Gastrocnemius medialis (tissue), 4 donors: ENCODE measurements at regions of chr20 and their contacts with region 1.

Region 1: GRCh38 chr20:16573001-16573965 is at the start of gene KIF16B:
- DNase-seq: peak; percentile 86 to 89
- ATAC-seq: peak; percentile 87 to 88
- H3K4me3 ChIP-seq: peak within 1 kb of the TSS; percentile 79 to 94 (median 90)
- H3K27ac ChIP-seq: peak within 1 kb of the TSS; percentile 86 to 93 (median 90)
- H3K4me1 ChIP-seq: peaks cover 21 to 22% of the 10 kb centered on the region in 2 donors
- H3K27me3 ChIP-seq: no peaks in the 10 kb centered on the region
- CTCF ChIP-seq: no peak
- POLR2A ChIP-seq: peak; percentile 61 to 69
- total RNA-seq, gene KIF16B: 13.4 to 23.9 (median 20.0) TPM

Region 2: GRCh38 chr20:16528078-16528477 is 45.2 kb before region 1 on chr20:
- in situ Hi-C with region 1: loop called in 1 of 4 experiments (anchors 10 kb)
- intact Hi-C with region 1: loop called (anchors 2 kb)
- DNase-seq: peak; percentile 81 to 86
- ATAC-seq: peak; percentile 98 to 99
- H3K4me3 ChIP-seq: no peak overlapping the region
- H3K27ac ChIP-seq: peak overlapping the region; percentile 73 to 88 (median 87)
- H3K4me1 ChIP-seq: peaks cover 14 to 37% of the 10 kb centered on the region in 2 donors
- H3K27me3 ChIP-seq: no peaks in the 10 kb centered on the region
- CTCF ChIP-seq: no peak
- POLR2A ChIP-seq: peak; percentile 50 to 58

Region 3: GRCh38 chr20:16541226-16541625 is 32.1 kb before region 1 on chr20:
- in situ Hi-C with region 1: no loop called
- intact Hi-C with region 1: no loop called
- DNase-seq: peak; percentile 64 to 83
- ATAC-seq: peak; percentile 95 to 99
- H3K4me3 ChIP-seq: no peak overlapping the region
- H3K27ac ChIP-seq: peak overlapping the region; percentile 62 to 81 (median 74)
- H3K4me1 ChIP-seq: peaks cover 14 to 22% of the 10 kb centered on the region in 2 donors
- H3K27me3 ChIP-seq: no peaks in the 10 kb centered on the region
- CTCF ChIP-seq: no peak
- POLR2A ChIP-seq: no peak

Region 4: DNA sequence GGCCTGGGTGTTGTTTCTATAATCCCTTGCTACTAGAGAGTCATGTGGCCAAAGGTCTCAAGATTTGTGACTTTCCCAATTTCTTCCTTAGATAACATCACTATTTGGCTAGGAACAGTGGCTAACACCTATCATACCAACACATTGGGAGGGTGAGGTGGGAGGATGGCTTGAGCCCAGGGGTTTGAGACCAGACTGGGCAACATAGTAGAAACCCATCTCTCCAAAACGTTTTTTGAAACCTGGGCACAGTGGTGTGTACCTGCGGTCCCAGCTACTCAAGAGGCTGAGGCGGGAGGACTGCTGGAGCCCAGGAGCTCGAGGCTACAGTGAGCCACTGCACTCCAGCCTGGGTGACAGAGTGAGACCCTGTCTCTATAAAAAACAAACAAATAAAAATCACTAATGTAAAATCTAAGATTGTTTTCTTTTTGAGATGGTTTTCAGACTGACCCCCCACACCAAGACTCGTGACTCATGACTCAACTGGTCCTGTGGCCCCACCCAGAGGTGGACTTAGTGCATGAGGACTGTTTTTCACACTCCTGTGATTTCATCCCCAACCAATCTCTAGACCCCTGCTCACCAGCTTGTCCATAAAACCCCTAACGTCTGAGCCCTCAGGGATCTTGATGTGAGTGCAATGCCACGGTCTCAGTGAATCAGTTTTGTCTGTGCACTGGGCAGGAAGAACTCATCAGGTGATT is 48.3 kb after region 1 on chr20:
- in situ Hi-C with region 1: no loop called
- intact Hi-C with region 1: no loop called
- DNase-seq: no peak
- ATAC-seq: no peak
- H3K4me3 ChIP-seq: no peak overlapping the region
- H3K27ac ChIP-seq: no peak overlapping the region
- H3K4me1 ChIP-seq: no peaks in the 10 kb centered on the region
- H3K27me3 ChIP-seq: no peaks in the 10 kb centered on the region
- CTCF ChIP-seq: no peak
- POLR2A ChIP-seq: no peak

Region 5: DNA sequence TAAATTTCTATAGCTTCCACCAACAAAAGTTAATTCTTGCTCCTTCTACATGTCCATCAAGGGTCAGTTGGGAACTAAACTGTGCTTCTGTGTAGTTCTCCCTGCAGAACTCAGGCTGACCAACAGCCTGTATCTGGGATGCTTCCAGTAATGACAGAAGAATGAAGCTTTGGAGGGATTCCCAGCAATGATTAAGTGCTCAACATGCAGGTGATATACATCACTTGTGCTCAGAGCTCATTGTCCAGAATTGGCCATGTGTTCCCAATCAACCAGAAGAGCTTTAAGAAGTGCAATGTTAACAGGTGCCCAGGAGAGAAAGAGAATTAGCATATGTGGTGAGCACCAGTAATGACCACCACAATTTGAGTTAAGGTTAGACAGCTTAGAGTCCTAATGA is 119.2 kb after region 1 on chr20:
- in situ Hi-C with region 1: no loop called
- intact Hi-C with region 1: no loop called
- DNase-seq: no peak
- ATAC-seq: no peak
- H3K4me3 ChIP-seq: no peak overlapping the region
- H3K27ac ChIP-seq: no peak overlapping the region
- H3K4me1 ChIP-seq: peaks cover 0 to 5% of the 10 kb centered on the region in 2 donors
- H3K27me3 ChIP-seq: no peaks in the 10 kb centered on the region
- CTCF ChIP-seq: no peak
- POLR2A ChIP-seq: no peak

Region 6: DNA sequence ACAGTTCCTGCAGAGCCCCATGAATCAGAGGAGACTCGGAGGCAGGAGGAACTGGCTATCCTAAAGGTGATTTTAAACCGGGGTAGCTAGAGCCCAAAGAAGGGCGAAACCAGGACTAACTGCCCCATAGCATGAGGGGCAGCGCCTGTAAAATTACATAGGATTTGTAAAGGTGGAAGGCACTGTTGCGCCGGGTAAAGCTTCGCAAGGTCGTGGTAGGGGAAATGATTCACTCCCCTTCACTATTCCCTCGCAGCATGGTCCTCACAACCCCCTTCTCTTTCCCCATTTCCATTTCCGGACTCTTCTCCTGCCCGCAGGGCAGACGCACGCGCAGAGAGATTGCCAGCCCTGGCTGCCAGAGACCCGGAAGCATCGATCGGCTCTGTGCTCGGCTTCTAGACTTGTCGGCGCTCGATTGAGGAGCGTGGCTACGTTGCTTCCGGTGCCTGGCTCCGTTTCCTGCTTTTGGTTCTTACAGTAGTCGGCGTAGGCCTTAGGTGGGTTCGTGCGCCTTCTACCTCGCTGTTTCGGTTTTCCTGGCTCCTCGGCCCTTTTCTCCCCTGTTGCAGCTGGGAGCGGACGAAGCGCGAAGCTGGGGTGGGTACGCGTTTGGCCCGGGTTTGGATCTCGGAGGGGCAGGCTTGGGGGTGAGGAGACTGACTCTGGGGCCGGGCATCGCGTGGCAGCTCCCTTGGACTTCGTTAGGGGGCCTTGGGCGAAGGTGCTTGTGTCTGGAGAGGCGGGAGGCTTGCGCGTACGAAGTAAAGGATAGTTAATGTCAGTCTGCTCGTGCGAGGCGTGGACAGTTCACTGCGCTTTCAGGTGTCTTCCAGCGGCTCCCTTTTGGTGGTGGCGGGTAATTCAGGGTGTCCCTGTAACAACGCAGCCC is 156.5 kb after region 1 on chr20 and contains the start of gene SNRPB2:
- in situ Hi-C with region 1: no loop called
- intact Hi-C with region 1: loop called (anchors 2 kb)
- DNase-seq: peak; percentile 87 to 91
- ATAC-seq: peak; percentile 100
- H3K4me3 ChIP-seq: peak within 1 kb of the TSS; percentile 80 to 98 (median 96)
- H3K27ac ChIP-seq: peak within 1 kb of the TSS; percentile 76 to 86 (median 82)
- H3K4me1 ChIP-seq: peaks cover 17 to 18% of the 10 kb centered on the region in 2 donors
- H3K27me3 ChIP-seq: peaks cover 0 to 5% (median 0%) of the 10 kb centered on the region in 3 donors
- CTCF ChIP-seq: no peak
- POLR2A ChIP-seq: peak; percentile 49 to 57
- total RNA-seq, gene SNRPB2: 18.6 to 37.5 (median 31.7) TPM